Endothelial cell of umbilical vein (primary cell): ENCODE measurements at regions of chr6 and their contacts with region 1.

Region 1: GRCh38 chr6:28907394-28907793 is 16.4 kb downstream of the TRIM27 start:
- DNase-seq: no peak
- H3K4me3 ChIP-seq: no peak overlapping the region
- H3K27ac ChIP-seq: no peak overlapping the region
- H3K4me1 ChIP-seq: no peaks in the 10 kb centered on the region
- H3K27me3 ChIP-seq: no peaks in the 10 kb centered on the region
- CTCF ChIP-seq: no peak
- POLR2A ChIP-seq: no peak

Region 2: GRCh38 chr6:28597217-28598005 is 310.0 kb before region 1 on chr6:
- CTCF ChIA-PET with region 1: no interaction called
- POLR2A ChIA-PET with region 1: no interaction called
- dilution Hi-C with region 1: no loop called
- intact Hi-C with region 1: no loop called
- DNase-seq: peak; percentile 48
- H3K4me3 ChIP-seq: peak overlapping the region; percentile 13 to 74 (median 66)
- H3K27ac ChIP-seq: no peak overlapping the region
- H3K4me1 ChIP-seq: no peaks in the 10 kb centered on the region
- H3K27me3 ChIP-seq: no peaks in the 10 kb centered on the region
- CTCF ChIP-seq: no peak
- POLR2A ChIP-seq: no peak

Region 3: GRCh38 chr6:28923318-28924102 is 16.1 kb after region 1 on chr6 and contains the start of gene TRIM27:
- CTCF ChIA-PET with region 1: interaction called, 4 read pairs
- POLR2A ChIA-PET with region 1: interaction called, 4 read pairs
- dilution Hi-C with region 1: no loop called
- intact Hi-C with region 1: loop called (anchors 2 kb)
- DNase-seq: peak; percentile 85
- H3K4me3 ChIP-seq: peak within 1 kb of the TSS; percentile 55 to 90 (median 63)
- H3K27ac ChIP-seq: peak within 1 kb of the TSS; percentile 77
- H3K4me1 ChIP-seq: peaks cover 18% of the 10 kb centered on the region
- H3K27me3 ChIP-seq: no peaks in the 10 kb centered on the region
- CTCF ChIP-seq: no peak
- POLR2A ChIP-seq: peak; percentile 95
- total RNA-seq, gene TRIM27: 67.5 and 69.2 TPM in 2 replicates

Region 4: GRCh38 chr6:28981833-28982475 is 74.6 kb after region 1 on chr6:
- CTCF ChIA-PET with region 1: no interaction called
- POLR2A ChIA-PET with region 1: no interaction called
- dilution Hi-C with region 1: no loop called
- intact Hi-C with region 1: no loop called
- DNase-seq: peak; percentile 94
- H3K4me3 ChIP-seq: peak overlapping the region; percentile 44 to 82 (median 60)
- H3K27ac ChIP-seq: peak overlapping the region; percentile 42
- H3K4me1 ChIP-seq: peaks cover 25% of the 10 kb centered on the region
- H3K27me3 ChIP-seq: no peaks in the 10 kb centered on the region
- CTCF ChIP-seq: no peak
- POLR2A ChIP-seq: no peak